Activated CD8-positive, alpha-beta T cell treated with anti-CD3 and anti-CD28 coated beads for 36 hours (primary cell): ENCODE measurements at regions of chr6 and their contacts with region 1.

Region 1: DNA sequence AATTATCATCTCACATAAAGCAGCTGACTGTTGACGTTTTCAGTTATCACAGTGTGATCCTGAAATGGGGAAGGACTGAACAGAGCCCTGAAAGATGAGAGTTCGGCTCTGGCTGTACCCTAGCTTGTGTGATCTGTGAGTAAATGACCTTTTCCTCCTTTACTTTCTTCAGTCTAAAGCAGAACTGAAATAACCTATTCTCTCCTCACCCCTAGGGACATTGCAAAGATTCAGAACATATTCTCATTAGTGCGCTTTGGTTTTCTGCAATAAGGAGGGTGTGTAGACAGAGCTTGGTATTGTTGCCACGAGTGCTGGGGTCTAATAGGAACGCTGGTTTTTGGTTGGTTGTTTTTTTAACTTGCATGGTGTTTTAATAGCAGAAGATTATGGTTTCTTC is 16.7 kb downstream of the FARS2 start:
- DNase-seq: no peak
- ATAC-seq: no peak
- H3K4me3 Mint-ChIP-seq: no peak overlapping the region
- H3K27ac Mint-ChIP-seq: no peak overlapping the region
- H3K4me1 Mint-ChIP-seq: peaks cover 42% of the 10 kb centered on the region
- H3K27me3 Mint-ChIP-seq: no peaks in the 10 kb centered on the region
- CTCF ChIP-seq: no peak

Region 2: DNA sequence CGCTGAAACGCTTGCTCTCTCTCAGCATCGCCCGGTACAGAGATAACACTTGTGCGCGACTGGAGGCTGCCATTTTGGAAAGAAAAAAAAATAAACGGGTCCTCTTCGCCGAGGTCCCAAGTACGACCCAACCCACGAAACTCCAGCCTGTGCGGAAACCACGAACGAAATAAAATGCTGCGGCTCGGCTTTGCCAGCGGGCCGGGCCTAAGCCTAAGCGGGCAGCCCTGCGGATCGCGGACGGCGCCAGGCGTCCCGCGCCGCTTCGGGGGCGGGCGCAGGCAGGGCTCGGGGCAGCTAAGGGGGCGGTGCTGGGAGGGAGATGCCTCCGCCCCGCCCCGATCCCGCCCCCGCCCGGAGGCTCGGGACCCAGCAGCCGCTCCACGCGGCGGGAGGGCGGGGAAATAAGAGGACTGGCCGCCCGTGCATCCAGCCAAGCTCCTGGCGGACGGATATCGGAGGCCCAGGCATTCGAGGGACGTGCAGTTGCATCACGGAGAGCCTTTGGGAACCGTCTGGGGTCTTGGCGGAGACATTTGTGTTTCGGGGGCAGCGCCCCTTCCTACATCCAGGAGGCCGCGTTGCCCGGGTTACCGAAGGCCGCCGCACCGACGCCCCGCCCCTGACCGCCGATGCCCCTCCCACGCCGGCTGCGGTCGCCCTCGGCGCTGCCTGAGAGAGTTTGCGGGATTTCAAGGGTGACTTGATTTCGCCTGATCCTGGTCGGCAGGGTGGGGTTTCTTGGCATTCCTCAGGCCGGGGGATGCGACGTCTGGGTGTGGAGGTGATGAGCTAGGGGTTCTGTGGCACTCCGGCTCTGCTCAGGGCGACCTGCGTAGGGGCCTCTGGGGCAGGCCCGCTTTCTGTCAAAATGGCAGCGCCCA is 17.1 kb before region 1 on chr6 and contains the starts of genes FARS2 and LYRM4:
- CTCF ChIA-PET with region 1: interaction called, 4 read pairs
- POLR2A ChIA-PET with region 1: interaction called, 41 read pairs
- intact Hi-C with region 1: no loop called
- DNase-seq: peak; percentile 90
- ATAC-seq: peak; percentile 85
- H3K4me3 Mint-ChIP-seq: peak within 1 kb of the TSS; percentile 87
- H3K27ac Mint-ChIP-seq: peak within 1 kb of the TSS; percentile 100
- H3K4me1 Mint-ChIP-seq: peaks cover 37% of the 10 kb centered on the region
- H3K27me3 Mint-ChIP-seq: no peaks in the 10 kb centered on the region
- CTCF ChIP-seq: no peak
- total RNA-seq, gene FARS2: 15.7 to 18.5 TPM
- total RNA-seq, gene LYRM4: 43.5 to 50.6 TPM

Region 3: DNA sequence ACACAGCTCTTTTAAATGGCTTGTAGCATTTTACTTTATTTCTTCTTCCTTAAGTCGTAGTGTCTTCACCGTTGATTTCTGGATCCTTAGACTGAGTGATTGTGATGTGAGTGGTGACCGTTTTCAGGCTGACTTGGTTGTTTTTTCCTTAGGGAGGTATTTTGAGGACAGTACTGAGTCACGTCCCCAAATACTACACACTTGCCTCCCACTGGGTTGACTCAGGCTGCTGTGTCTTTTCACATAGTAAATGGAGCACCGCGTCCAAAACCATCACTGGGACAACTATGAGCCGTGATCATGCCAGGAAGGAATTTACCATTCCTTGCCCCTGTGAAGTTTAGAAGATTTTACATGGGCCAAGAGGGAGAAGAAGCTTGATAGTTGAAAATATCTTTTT is 157.4 kb after region 1 on chr6:
- CTCF ChIA-PET with region 1: no interaction called
- POLR2A ChIA-PET with region 1: no interaction called
- intact Hi-C with region 1: no loop called
- DNase-seq: no peak
- ATAC-seq: no peak
- H3K4me3 Mint-ChIP-seq: no peak overlapping the region
- H3K27ac Mint-ChIP-seq: no peak overlapping the region
- H3K4me1 Mint-ChIP-seq: peaks cover 7% of the 10 kb centered on the region
- H3K27me3 Mint-ChIP-seq: no peaks in the 10 kb centered on the region
- CTCF ChIP-seq: no peak